GM12878 (cell line): ENCODE measurements at regions of chr4 and their contacts with region 1.

Region 1: DNA sequence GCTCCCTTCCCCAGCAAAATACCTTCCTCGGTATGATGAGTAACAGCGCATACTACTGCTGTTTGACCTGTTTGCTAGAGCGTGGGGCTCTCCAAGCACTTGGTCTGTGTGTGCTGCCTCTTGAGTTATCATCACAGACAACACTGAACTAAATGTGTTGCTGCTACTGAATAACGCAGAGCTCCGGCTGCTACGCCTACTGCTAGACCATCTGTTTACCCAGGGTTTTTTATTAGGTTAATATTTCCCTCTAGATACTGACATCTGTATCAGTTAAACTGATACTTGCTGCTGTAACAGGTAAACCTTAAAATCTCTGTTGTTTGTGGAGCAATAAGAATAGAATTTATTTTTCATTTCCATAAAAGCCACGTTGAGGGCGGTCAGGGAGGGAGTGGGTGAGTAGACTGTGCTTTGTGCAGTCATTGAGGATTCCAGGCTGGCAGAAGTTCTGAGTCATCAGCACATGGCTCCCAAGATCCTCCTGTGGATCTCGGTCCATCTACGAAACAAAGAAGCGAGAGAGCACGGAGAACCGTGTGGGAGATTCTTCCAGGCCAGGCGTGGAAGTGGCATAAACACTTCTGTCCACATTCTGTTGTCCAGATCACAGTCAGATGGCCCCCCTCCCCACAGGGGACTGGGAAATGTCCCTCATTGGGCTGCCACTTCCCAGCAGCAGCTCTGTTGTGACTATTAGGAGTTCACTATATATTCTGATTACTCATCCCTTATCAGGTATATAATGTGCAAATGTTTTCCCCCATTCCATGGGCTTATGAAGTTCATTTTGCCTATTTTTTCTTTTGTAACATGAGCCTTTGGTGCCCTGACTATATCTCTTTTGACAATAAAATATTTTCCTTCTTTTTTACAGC is 14.1 kb downstream of the GRK4 start:
- DNase-seq: no peak
- ATAC-seq: no peak
- H3K4me3 ChIP-seq: no peak overlapping the region
- H3K27ac ChIP-seq: no peak overlapping the region
- H3K4me1 ChIP-seq: no peaks in the 10 kb centered on the region
- H3K27me3 ChIP-seq: no peaks in the 10 kb centered on the region
- CTCF ChIP-seq: no peak
- EP300 ChIP-seq: no peak
- POLR2A ChIP-seq: no peak
- RAD21 ChIP-seq: no peak

Region 2: GRCh38 chr4:2886622-2887021 is 90.8 kb before region 1 on chr4:
- CTCF ChIA-PET with region 1: no interaction called
- POLR2A ChIA-PET with region 1: no interaction called
- RAD21 ChIA-PET with region 1: no interaction called
- SMC1A ChIA-PET with region 1: no interaction called
- in situ Hi-C with region 1: no loop called
- intact Hi-C with region 1: no loop called
- DNase-seq: no peak
- ATAC-seq: no peak
- H3K4me3 ChIP-seq: no peak overlapping the region
- H3K27ac ChIP-seq: no peak overlapping the region
- H3K4me1 ChIP-seq: no peaks in the 10 kb centered on the region
- H3K27me3 ChIP-seq: no peaks in the 10 kb centered on the region
- CTCF ChIP-seq: no peak
- EP300 ChIP-seq: no peak
- POLR2A ChIP-seq: no peak
- RAD21 ChIP-seq: no peak

Region 3: GRCh38 chr4:2963175-2963965 is 14.1 kb before region 1 on chr4 and contains the starts of genes GRK4 and NOP14:
- CTCF ChIA-PET with region 1: interaction called, 13 read pairs
- POLR2A ChIA-PET with region 1: interaction called, 4 read pairs
- RAD21 ChIA-PET with region 1: interaction called, 6 read pairs
- SMC1A ChIA-PET with region 1: interaction called, 8 read pairs
- in situ Hi-C with region 1: no loop called
- intact Hi-C with region 1: no loop called
- DNase-seq: peak; percentile 92
- ATAC-seq: peak; percentile 92
- H3K4me3 ChIP-seq: peak within 1 kb of the TSS; percentile 78
- H3K27ac ChIP-seq: peak within 1 kb of the TSS; percentile 91
- H3K4me1 ChIP-seq: peaks cover 15% of the 10 kb centered on the region
- H3K27me3 ChIP-seq: no peaks in the 10 kb centered on the region
- CTCF ChIP-seq: peak in 2 of 3 experiments; percentile 9 to 23; a peak in 3 of 6 replicates
- EP300 ChIP-seq: 0 out of 4 replicates have a peak, but pooled peaks of 1 of the 2 experiments have one; percentile 22
- POLR2A ChIP-seq: peak; percentile 90
- RAD21 ChIP-seq: no peak
- polyA plus RNA-seq, gene GRK4: 1.1 to 1.6 TPM
- polyA plus RNA-seq, gene NOP14: 13.8 to 24.7 TPM

Region 4: DNA sequence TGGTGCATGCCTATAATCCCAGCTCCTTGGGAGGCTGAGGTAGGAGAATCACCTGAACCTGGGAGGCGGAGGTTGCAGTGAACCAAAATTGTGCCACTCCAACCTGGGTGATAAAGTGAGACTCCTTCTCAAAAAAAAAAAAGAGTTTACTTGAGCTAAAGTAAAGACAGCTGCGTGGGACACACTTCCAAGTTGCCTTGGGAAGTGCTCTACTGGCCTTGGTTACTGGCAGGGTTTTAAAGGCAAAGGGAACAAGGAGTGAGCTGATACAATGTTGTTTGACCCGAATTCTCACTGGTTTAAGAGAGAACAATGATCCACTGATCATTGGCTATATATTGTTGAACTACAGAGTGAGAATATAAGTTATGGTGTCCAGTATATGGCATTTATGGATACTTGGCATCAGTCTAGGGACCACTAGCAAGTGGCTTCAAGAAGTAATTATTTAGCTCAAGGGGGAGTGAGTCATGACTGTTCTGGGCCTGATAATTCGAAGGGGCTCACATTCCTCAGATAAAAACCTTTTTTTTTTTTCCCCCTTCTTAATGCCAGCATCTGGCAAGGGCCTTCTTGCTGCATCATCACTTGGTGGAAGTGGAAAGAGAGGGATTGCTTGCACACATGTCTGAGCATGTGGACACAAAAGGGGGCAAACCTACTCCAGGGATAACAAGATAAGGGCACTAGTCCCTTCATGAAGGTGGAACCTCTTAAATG is 18.3 kb after region 1 on chr4:
- CTCF ChIA-PET with region 1: interaction called, 12 read pairs
- POLR2A ChIA-PET with region 1: no interaction called
- RAD21 ChIA-PET with region 1: no interaction called
- SMC1A ChIA-PET with region 1: interaction called, 7 read pairs
- in situ Hi-C with region 1: no loop called
- intact Hi-C with region 1: no loop called
- DNase-seq: no peak
- ATAC-seq: no peak
- H3K4me3 ChIP-seq: no peak overlapping the region
- H3K27ac ChIP-seq: no peak overlapping the region
- H3K4me1 ChIP-seq: no peaks in the 10 kb centered on the region
- H3K27me3 ChIP-seq: no peaks in the 10 kb centered on the region; a peak in 1 of 4 replicates
- CTCF ChIP-seq: no peak
- EP300 ChIP-seq: no peak
- POLR2A ChIP-seq: no peak
- RAD21 ChIP-seq: no peak

Region 5: DNA sequence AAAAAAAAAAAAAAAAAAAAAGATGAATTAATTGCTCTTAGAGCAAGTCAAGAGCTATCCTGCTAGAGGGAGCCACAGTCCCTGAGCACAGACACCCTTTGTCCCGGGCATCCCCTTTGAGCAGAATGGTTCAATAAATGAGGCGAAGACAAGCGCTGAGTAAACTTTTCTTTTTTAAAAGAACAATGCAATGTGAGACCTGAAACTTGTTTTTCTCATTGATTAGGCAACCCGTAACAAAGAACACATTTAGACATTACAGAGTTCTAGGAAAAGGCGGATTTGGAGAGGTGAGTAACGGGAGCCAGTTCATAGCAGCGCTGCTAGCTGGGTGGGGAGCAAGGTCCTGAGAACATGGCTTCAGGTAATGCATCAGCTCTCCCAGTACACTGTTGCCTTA is 32.0 kb after region 1 on chr4:
- CTCF ChIA-PET with region 1: interaction called, 12 read pairs
- POLR2A ChIA-PET with region 1: no interaction called
- RAD21 ChIA-PET with region 1: interaction called, 3 read pairs
- SMC1A ChIA-PET with region 1: interaction called, 4 read pairs
- in situ Hi-C with region 1: no loop called
- intact Hi-C with region 1: no loop called
- DNase-seq: no peak
- ATAC-seq: peak; percentile 82
- H3K4me3 ChIP-seq: no peak overlapping the region
- H3K27ac ChIP-seq: no peak overlapping the region
- H3K4me1 ChIP-seq: peaks cover 20% of the 10 kb centered on the region
- H3K27me3 ChIP-seq: no peaks in the 10 kb centered on the region; a peak in 1 of 4 replicates
- CTCF ChIP-seq: peak; percentile 48 to 65 (median 54); a peak in 5 of 6 replicates
- EP300 ChIP-seq: no peak
- POLR2A ChIP-seq: no peak
- RAD21 ChIP-seq: peak; percentile 89

Region 6: DNA sequence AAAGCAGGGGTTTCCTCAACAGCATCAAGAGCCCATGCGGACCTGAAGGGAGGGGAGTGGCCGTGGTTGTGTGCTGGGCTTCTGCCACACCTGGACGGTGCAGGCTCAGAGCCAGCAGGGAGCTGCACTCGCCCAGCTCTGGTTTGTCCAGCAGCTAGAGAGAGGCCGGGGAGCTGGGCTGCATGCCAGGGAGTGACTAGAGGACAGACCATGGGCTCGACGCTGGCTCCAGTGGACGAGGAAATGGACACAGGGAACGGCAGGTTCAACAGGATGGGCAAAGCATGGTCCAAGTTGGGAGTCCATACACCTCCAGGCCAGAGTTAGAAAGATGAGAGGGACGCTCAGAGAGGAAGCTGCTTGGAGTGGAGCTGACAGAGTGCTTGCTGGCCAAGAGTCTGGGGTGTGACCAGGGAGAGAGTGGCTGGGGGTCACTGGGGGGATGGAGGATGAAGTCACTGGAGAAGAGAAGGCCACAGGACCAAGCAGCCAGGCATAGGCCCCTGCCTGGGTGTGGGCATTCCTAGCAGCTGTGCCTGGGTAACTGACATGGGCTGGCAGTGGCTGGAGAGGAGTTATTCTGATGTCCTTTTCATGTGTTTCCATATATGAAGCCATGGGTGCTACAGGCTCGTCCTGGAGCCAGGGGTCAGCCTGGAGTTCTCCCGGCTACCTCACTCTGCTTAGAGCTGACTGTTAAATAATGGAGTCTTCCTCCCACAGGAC is 54.1 kb after region 1 on chr4:
- CTCF ChIA-PET with region 1: interaction called, 54 read pairs
- POLR2A ChIA-PET with region 1: no interaction called
- RAD21 ChIA-PET with region 1: interaction called, 3 read pairs
- SMC1A ChIA-PET with region 1: interaction called, 8 read pairs
- in situ Hi-C with region 1: loop called (anchors 10 kb)
- intact Hi-C with region 1: no loop called
- DNase-seq: no peak
- ATAC-seq: no peak
- H3K4me3 ChIP-seq: no peak overlapping the region
- H3K27ac ChIP-seq: no peak overlapping the region
- H3K4me1 ChIP-seq: no peaks in the 10 kb centered on the region; the same call in 1 of the 2 replicates
- H3K27me3 ChIP-seq: peaks cover 0 to 3% of the 10 kb centered on the region in 2 experiments; a peak in 1 of 4 replicates
- CTCF ChIP-seq: no peak
- EP300 ChIP-seq: no peak
- POLR2A ChIP-seq: no peak
- RAD21 ChIP-seq: no peak

Region 7: DNA sequence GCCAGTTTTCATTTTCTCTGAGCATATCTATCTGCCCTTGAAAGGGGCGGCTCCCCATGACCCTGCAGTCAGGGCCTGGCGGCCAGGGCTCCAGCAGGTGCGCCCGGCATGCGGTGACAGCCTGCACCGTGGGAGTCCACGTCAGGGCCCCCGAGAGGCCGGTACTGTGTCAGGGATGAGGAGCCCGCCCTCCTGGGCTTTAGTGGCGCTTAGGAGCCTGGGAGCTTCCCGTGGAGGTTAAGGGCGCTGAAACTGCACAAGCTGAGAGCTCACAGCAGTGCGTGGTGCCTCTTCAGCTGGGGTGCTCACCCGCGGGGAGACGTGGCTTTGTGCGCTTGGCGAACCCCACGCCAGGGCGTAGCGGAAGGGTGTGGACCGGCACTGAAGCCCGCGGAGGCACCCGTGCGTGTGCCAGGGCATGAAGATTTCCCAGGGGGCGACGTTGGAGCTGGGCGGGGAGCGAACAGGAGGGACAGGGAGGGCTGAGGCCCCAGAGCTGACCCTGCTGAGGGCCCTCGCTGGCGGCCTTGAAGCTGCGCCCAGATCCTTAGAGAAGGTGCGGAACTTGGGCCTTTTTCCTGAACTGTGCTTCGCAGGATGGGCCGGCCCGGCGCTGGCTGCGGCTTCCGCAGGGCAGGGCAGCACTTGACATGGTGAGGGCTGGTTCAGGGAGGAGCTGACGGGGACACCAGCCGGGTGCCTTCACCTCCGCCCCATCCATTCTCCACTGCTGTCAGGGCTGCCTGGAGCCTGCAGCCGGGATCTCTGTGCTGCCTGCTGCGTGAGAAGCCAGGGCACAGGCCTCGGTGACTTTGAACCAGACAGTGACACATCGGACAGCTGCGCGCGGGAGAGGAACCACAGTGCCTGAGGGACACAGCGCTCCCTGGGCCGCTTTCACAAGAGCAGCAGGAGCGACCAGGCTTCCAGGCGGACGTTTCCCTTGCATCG is 64.0 kb after region 1 on chr4:
- CTCF ChIA-PET with region 1: interaction called, 54 read pairs
- POLR2A ChIA-PET with region 1: no interaction called
- RAD21 ChIA-PET with region 1: interaction called, 7 read pairs
- SMC1A ChIA-PET with region 1: interaction called, 8 read pairs
- in situ Hi-C with region 1: loop called (anchors 10 kb)
- intact Hi-C with region 1: loop called (anchors 1 kb)
- DNase-seq: no peak
- ATAC-seq: peak; percentile 66
- H3K4me3 ChIP-seq: peak overlapping the region; percentile 85
- H3K27ac ChIP-seq: peak overlapping the region; percentile 95
- H3K4me1 ChIP-seq: peaks cover 66% of the 10 kb centered on the region
- H3K27me3 ChIP-seq: no peaks in the 10 kb centered on the region
- CTCF ChIP-seq: no peak
- EP300 ChIP-seq: no peak
- POLR2A ChIP-seq: peak; percentile 75; the same call in 1 of the 2 replicates
- RAD21 ChIP-seq: no peak

Region 8: DNA sequence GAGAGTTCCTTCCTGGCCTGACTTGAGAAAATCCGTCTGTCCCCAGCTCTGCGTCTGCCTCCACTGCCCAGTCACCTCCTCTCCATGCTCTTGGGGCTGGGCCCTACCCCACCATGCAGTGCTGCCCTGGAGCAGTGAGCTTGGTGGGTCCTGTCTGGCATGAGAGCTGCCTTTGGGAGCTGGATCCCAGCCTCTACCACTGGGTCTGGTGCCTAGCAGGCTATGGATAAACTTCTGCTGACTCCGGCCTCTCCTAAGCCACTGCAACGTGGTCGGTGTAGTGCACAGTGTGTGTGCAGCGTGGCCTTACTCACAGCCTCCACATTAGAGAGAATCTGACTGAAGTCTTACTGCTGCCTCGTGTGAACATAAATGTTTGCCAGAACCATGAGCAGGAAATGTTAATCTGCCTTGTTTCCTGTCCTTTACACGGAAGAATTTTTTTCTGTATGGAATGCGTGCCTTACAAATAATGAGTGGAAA is 144.7 kb after region 1 on chr4:
- CTCF ChIA-PET with region 1: no interaction called
- POLR2A ChIA-PET with region 1: no interaction called
- RAD21 ChIA-PET with region 1: no interaction called
- SMC1A ChIA-PET with region 1: no interaction called
- in situ Hi-C with region 1: no loop called
- intact Hi-C with region 1: no loop called
- DNase-seq: no peak
- ATAC-seq: no peak
- H3K4me3 ChIP-seq: no peak overlapping the region
- H3K27ac ChIP-seq: no peak overlapping the region
- H3K4me1 ChIP-seq: no peaks in the 10 kb centered on the region
- H3K27me3 ChIP-seq: no peaks in the 10 kb centered on the region
- CTCF ChIP-seq: no peak
- EP300 ChIP-seq: no peak
- POLR2A ChIP-seq: peak; percentile 30; the same call in 1 of the 2 replicates
- RAD21 ChIP-seq: no peak